H1 (cell line): ENCODE measurements at regions of chr11 and their contacts with region 1.

Region 1: DNA sequence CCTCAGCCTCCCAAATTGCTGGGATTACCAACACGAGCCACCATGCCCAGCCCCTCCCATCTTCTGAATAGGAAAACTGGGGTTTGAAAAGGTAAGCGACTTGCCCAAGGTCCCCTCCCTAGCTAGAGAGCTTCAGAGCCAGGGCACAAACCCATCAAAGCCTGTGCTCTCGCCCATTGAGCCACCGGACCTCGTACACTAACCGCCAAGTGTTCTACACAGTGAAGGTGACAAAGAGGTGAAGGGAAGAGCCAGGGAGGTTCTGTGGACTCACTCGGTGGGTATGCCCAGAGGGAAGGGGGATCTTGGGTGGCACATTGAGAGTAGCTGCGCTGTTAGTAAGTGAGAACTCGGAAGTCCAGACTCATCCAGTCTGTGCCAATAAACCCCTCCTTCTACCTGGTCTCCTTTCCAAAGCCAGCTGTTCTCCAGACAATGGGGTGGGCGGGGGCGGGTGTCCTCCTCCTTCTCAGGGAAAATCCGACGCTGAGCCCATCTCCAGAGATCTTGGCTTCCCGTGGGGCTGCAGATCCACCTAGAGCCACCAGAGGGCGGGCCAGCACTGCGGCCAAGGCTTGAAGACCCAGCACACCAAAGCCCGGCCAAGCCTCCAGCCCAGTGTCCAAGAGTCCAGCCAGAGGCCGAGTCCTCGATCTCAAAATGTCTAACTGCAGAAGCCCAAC is 3.2 kb upstream of the RTN4RL2 start:
- DNase-seq: peak in 1 of 2 experiments; percentile 97
- H3K4me3 ChIP-seq: peak overlapping the region; percentile 62 to 97 (median 74); a peak in 7 of 8 replicates
- H3K27ac ChIP-seq: no peak overlapping the region
- H3K4me1 ChIP-seq: peaks cover 0 to 20% (median 11%) of the 10 kb centered on the region in 4 experiments; a peak in 6 of 7 replicates
- H3K27me3 ChIP-seq: peaks cover 8 to 30% (median 23%) of the 10 kb centered on the region in 4 experiments
- CTCF ChIP-seq: peak; percentile 92 to 97 (median 95)
- EP300 ChIP-seq: peak in 1 of 2 experiments; percentile 60; a peak in 1 of 3 replicates
- POLR2A ChIP-seq: no peak
- RAD21 ChIP-seq: peak; percentile 89 to 93

Region 2: DNA sequence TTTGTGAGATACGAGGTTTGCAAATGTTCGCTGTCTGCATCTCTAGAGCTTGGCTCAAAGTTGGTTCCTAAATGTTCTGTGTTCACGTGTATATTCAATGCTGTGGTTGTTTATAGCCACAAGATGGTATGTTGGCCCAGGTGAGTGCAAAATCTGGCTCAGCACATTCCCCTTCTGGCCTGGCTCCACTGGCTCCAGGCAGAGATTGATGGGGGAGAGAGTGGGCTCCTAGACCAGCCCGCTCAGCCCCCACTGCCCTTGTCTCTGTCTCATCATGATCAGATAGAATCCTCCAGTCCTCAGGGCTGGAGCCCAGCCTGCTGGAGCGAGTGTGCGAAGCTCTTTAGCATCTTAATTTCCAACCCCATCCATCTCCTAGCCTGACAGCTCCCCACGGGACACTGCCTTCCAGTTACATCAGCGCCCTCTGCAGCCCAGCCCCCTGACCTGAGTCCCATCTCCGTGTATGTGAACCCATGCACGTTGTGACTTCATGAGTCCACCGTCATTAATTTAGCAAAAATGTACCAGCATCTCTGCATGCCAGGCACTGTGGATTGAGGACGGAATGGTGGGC is 117.0 kb before region 1 on chr11:
- CTCF ChIA-PET with region 1: interaction called, 49 read pairs
- POLR2A ChIA-PET with region 1: interaction called, 5 read pairs
- DNase-seq: no peak
- H3K4me3 ChIP-seq: no peak overlapping the region
- H3K27ac ChIP-seq: no peak overlapping the region
- H3K4me1 ChIP-seq: peaks cover 4 to 14% (median 8%) of the 10 kb centered on the region in 4 experiments; a peak in 6 of 7 replicates
- H3K27me3 ChIP-seq: peaks cover 0 to 9% (median 4%) of the 10 kb centered on the region in 4 experiments; a peak in 4 of 7 replicates
- CTCF ChIP-seq: peak; percentile 39 to 68 (median 64)
- EP300 ChIP-seq: no peak
- POLR2A ChIP-seq: no peak
- RAD21 ChIP-seq: peak; percentile 30 to 55

Region 3: GRCh38 chr11:57426929-57427726 is 30.0 kb before region 1 on chr11 and contains the start of gene SLC43A3:
- CTCF ChIA-PET with region 1: interaction called, 68 read pairs
- POLR2A ChIA-PET with region 1: interaction called, 4 read pairs
- DNase-seq: peak; percentile 23 to 83
- H3K4me3 ChIP-seq: peak within 1 kb of the TSS; percentile 53 to 65 (median 62)
- H3K27ac ChIP-seq: no peak within 1 kb of the TSS
- H3K4me1 ChIP-seq: peaks cover 0 to 19% (median 13%) of the 10 kb centered on the region in 4 experiments; a peak in 6 of 7 replicates
- H3K27me3 ChIP-seq: peaks cover 0 to 11% (median 3%) of the 10 kb centered on the region in 4 experiments; a peak in 5 of 7 replicates
- CTCF ChIP-seq: no peak
- EP300 ChIP-seq: no peak
- POLR2A ChIP-seq: peak; percentile 56 to 60; a peak in 2 of 3 replicates
- RAD21 ChIP-seq: no peak
- total RNA-seq, gene SLC43A3: 31.8 and 32.5 TPM in 2 replicates

Region 4: GRCh38 chr11:57474017-57474802 is 17.1 kb after region 1 on chr11:
- CTCF ChIA-PET with region 1: interaction called, 452 read pairs
- POLR2A ChIA-PET with region 1: interaction called, 141 read pairs
- DNase-seq: no peak
- H3K4me3 ChIP-seq: no peak overlapping the region
- H3K27ac ChIP-seq: no peak overlapping the region
- H3K4me1 ChIP-seq: peaks cover 4 to 25% (median 13%) of the 10 kb centered on the region in 4 experiments
- H3K27me3 ChIP-seq: peaks cover 0 to 35% (median 22%) of the 10 kb centered on the region in 4 experiments; a peak in 6 of 7 replicates
- CTCF ChIP-seq: no peak
- EP300 ChIP-seq: no peak
- POLR2A ChIP-seq: no peak
- RAD21 ChIP-seq: no peak

Region 5: GRCh38 chr11:57515332-57516060 is 58.4 kb after region 1 on chr11 and contains the start of gene SLC43A1:
- CTCF ChIA-PET with region 1: interaction called, 9 read pairs
- POLR2A ChIA-PET with region 1: interaction called, 33 read pairs
- DNase-seq: peak in 1 of 2 experiments; percentile 66
- H3K4me3 ChIP-seq: peak within 1 kb of the TSS; percentile 49 to 76 (median 68)
- H3K27ac ChIP-seq: no peak within 1 kb of the TSS
- H3K4me1 ChIP-seq: peaks cover 3 to 10% (median 5%) of the 10 kb centered on the region in 4 experiments
- H3K27me3 ChIP-seq: peaks cover 0 to 21% (median 10%) of the 10 kb centered on the region in 4 experiments; a peak in 4 of 7 replicates
- CTCF ChIP-seq: no peak
- EP300 ChIP-seq: no peak
- POLR2A ChIP-seq: no peak; a peak in 1 of 3 replicates
- RAD21 ChIP-seq: 0 out of 4 replicates have a peak, but pooled peaks of 1 of the 2 experiments have one; percentile 0
- total RNA-seq, gene SLC43A1: 30.1 and 34.5 TPM in 2 replicates

Region 6: GRCh38 chr11:58133309-58134076 is 676.4 kb after region 1 on chr11:
- CTCF ChIA-PET with region 1: no interaction called
- POLR2A ChIA-PET with region 1: no interaction called
- DNase-seq: no peak
- H3K4me3 ChIP-seq: no peak overlapping the region
- H3K27ac ChIP-seq: no peak overlapping the region
- H3K4me1 ChIP-seq: no peaks in the 10 kb centered on the region
- H3K27me3 ChIP-seq: no peaks in the 10 kb centered on the region
- CTCF ChIP-seq: peak in 1 of 3 experiments; percentile 25; a peak in 1 of 4 replicates
- EP300 ChIP-seq: no peak
- POLR2A ChIP-seq: no peak
- RAD21 ChIP-seq: peak; percentile 30 to 36; a peak in 3 of 4 replicates